Panc1 (cell line): ENCODE measurements at regions of chr5 and their contacts with region 1.

Region 1: DNA sequence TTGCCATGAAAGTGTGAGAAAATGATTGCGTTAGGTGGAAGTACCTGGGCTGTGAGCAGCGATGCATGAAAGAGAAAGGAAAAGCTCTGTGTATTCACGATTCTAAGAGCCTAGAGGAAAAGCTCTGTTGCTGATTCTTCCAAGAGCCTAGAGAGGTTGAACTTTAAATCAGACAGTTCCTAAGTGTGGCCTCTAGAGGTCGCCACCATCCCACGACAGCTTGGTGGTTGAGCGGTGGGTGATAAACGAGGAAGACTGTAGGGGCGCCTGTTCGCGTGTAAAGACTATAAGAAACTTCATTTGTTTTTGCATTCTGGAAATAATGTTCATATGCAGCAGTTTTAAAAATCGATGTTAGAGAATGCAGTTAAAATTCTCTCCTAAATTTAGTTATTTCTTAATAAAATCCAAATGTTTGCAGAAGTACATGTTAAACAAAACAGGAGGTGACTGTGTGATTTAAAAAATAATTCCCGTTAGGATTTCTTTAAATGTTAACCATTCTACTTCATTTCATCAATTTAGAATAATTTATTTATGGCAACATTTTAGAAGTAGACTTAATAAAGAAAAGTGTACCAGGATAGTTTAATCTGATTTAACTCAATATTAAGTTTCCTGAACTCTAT is 107.7 kb downstream of the TENT4A start:
- DNase-seq: peak; percentile 24
- ATAC-seq: no peak
- H3K4me3 ChIP-seq: no peak overlapping the region
- H3K27ac ChIP-seq: no peak overlapping the region
- H3K4me1 ChIP-seq: no peaks in the 10 kb centered on the region; the same call in 1 of the 2 replicates
- H3K27me3 ChIP-seq: no peaks in the 10 kb centered on the region
- CTCF ChIP-seq: peak; percentile 86

Region 2: DNA sequence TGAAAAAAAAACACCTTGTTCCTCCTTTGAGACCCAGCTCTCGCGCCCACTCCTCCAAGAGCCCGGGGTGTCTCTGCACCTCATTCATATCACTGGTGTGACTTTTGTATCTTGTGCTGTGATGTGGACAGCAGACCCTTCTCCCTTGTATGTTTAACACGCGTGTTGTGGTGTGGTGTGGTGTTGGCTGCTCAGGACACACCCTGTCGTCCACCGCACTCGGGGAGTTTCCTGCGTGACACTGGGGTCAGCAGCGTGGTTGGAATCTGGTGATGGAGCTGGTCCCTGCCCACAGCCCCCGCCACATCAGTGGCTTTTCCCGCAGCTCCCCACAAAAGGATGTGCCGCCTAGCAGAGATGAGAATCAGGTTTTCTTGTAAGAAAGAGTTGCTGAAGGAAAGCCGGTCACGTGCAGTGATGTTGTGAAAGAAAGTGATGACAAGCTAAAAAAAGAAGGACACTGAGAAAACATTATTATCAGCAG is 46.2 kb before region 1 on chr5:
- CTCF ChIA-PET with region 1: interaction called, 11 read pairs
- POLR2A ChIA-PET with region 1: no interaction called
- in situ Hi-C with region 1: no loop called
- intact Hi-C with region 1: no loop called
- DNase-seq: no peak
- ATAC-seq: no peak
- H3K4me3 ChIP-seq: no peak overlapping the region
- H3K27ac ChIP-seq: no peak overlapping the region
- H3K4me1 ChIP-seq: no peaks in the 10 kb centered on the region; the same call in 1 of the 2 replicates
- H3K27me3 ChIP-seq: no peaks in the 10 kb centered on the region
- CTCF ChIP-seq: no peak

Region 3: DNA sequence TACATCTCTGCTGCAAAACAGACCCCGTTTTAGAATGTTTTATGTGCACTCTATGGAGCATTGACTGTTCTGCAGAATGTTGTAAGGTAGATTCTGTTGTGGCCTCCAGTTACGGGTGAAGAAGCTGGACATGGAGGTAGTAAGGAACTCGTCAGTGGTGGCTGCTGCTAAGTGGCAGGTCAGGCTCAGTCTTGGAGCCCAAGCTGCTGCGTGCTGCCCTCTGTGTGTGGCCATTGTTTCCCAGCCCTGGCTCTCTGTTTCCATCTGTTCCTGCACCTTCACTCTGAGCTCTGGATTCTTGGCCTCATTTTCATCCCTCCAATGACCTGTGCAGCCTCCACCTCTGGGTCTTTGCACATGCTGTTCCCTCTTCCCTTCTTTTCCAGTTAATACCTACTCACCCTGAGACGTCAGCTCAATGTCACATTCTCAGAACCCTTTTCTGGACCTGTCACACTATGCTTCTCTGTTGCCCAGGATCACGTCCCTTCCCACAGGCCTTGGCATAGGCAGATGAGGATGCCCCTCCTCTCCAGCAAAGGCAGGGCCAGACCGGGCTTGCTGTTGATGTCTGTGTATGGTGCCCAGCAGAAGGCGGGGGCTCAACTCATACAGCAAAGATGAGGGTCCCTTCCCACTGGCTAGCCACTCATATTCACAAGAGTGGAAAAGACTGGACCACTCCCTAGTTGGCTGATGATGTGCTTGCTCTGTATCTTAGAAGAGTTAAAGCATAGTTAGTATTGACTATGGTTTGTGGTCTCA is 10.1 kb before region 1 on chr5:
- CTCF ChIA-PET with region 1: no interaction called
- POLR2A ChIA-PET with region 1: no interaction called
- in situ Hi-C with region 1: no loop called
- intact Hi-C with region 1: no loop called
- DNase-seq: no peak
- ATAC-seq: no peak
- H3K4me3 ChIP-seq: no peak overlapping the region
- H3K27ac ChIP-seq: peak overlapping the region; percentile 4; the same call in 1 of the 2 replicates
- H3K4me1 ChIP-seq: peaks cover 6% of the 10 kb centered on the region
- H3K27me3 ChIP-seq: no peaks in the 10 kb centered on the region
- CTCF ChIP-seq: no peak